ENCODE measurements at regions of chr19 and their contacts with region 1.

Region 1: DNA sequence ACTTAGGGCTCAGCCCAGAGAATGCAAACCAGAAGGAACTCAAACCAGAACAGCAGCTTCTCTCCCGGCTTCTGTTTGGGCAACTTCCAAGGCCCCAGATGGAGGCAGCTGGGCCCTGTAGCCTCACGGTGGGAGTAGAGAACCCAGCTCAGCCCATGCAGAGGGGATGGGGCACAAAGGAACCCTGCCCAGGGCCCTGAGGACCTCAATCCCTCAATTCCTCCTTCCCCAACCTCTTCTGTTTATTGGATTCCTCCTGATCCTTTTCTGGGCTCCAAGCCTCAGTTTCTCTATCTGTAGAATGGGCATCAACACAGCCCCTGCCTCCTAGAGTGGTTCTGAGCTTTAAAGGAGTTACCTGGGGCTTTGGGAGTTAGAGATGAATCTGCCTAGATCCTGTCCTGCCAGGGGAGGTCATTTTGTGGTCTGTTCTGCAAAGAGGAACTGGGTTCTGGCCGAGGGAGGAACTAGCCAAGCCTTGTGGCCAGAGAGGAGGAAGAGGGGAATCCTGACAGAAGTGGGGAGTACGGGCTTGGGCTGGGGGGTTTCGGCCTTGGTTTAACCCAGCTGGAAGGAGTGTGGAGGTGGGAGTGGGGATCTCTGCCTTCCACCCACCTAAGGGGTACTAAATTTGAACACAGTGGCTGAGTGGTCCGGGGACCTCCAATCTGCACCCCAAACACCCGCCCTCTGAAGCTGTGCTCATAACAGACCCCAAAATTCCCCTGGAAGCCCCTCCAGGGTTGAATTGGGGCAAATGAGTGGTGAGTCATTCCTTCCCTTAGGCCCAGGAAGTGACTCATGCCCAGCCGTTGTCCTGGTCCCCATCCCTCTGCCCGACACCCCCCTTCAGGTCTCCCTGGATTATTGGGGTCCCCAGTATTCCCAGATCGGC is 2.7 kb downstream of the ADGRE5 start:
- DNase-seq: peak; percentile 70
- CTCF ChIP-seq: no peak

Region 2: DNA sequence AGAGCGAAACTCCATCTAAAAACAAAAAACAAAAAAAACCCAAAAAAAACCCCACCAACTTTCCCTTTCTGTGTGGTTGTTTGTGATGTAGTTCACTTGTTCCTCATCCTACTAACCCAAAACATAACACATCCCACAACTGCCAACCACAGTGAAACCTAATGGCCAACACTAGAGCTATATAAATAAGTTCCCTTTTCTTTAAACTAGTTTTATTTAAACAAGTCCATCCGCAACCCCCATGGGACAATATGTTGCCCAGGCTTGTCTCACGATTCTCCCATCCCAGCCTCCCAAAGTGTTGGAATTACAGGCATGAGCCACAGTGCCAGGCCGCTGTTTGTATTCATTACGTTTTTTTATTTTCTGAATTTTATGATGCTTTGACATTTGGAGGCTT is 73.9 kb before region 1 on chr19:
- CTCF ChIA-PET with region 1: no interaction called
- POLR2A ChIA-PET with region 1: no interaction called
- DNase-seq: peak; percentile 56
- CTCF ChIP-seq: no peak

Region 3: DNA sequence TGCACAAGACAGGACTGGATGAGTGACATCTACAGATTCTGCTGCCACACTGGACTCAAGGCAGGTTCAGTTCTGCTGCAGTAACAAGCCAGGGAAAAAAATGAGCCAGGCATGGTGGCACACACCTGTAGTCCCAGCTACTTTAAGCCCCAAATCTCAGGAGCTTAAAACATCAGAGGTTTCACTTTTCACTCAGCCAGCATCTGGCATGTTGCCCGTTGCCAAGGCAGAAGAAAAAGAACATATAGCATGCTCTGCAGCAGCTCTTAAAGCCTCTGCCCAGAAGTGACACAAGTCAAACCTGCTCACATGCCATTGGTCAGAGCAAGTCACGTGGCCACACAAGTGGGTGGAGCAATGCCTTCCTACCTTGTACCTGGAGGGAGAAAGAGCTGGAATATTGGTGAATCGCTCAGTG is 17.4 kb before region 1 on chr19:
- CTCF ChIA-PET with region 1: interaction called, 7 read pairs
- POLR2A ChIA-PET with region 1: interaction called, 16 read pairs
- DNase-seq: peak; percentile 65
- CTCF ChIP-seq: no peak

Region 4: DNA sequence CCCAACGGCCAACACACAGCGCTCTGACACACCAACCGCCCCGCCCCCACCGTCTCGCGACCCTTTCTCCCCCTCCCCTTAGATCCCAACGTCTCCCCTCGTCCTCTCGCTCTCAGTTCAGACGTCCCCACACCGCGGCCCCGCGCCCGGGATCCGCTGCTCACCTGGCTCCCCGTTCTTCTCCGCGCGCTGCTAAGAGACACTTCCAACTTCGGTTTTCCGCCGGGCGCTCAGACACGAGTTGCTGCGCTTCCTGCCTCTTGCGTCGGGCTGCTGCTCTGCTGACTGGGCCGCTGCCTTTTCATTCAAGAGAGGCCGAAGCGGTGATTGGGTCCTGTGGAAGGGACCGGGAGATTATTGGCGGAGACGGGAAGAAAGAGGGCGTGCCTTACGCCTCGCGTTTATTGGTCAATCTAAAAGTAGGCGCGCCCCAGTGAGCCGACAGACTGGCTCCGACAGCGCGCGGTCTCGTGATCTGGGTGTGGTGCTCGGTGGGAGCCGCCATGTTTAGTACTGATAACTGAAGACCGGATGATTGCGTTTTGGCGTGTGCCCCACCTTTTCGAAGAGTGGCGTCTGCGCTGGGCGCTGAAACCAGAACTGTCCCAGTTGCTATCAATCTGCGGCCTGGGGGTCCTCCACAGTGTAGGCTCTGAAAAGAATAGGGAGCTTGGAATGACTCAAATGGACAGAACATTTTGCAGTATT is 35.4 kb after region 1 on chr19 and contains the start of gene DDX39A:
- CTCF ChIA-PET with region 1: no interaction called
- POLR2A ChIA-PET with region 1: interaction called, 15 read pairs
- DNase-seq: peak; percentile 97
- CTCF ChIP-seq: no peak

Measured in GM10248 (cell line).